Prostate gland (tissue), 2 donors: ENCODE measurements at regions of chr9 and their contacts with region 1.

Region 1: GRCh38 chr9:20622330-20623020 is at the start of gene MLLT3:
- DNase-seq: peak; percentile 95
- H3K4me3 ChIP-seq: peak within 1 kb of the TSS; percentile 80 to 90
- H3K27ac ChIP-seq: peak within 1 kb of the TSS; percentile 87 to 90
- H3K4me1 ChIP-seq: peaks cover 2% of the 10 kb centered on the region
- H3K27me3 ChIP-seq: no peaks in the 10 kb centered on the region
- CTCF ChIP-seq: peak in 2 of 4 experiments; percentile 30
- POLR2A ChIP-seq: peak; percentile 76
- total RNA-seq, gene MLLT3: 13.1 to 22.0 TPM

Region 2: DNA sequence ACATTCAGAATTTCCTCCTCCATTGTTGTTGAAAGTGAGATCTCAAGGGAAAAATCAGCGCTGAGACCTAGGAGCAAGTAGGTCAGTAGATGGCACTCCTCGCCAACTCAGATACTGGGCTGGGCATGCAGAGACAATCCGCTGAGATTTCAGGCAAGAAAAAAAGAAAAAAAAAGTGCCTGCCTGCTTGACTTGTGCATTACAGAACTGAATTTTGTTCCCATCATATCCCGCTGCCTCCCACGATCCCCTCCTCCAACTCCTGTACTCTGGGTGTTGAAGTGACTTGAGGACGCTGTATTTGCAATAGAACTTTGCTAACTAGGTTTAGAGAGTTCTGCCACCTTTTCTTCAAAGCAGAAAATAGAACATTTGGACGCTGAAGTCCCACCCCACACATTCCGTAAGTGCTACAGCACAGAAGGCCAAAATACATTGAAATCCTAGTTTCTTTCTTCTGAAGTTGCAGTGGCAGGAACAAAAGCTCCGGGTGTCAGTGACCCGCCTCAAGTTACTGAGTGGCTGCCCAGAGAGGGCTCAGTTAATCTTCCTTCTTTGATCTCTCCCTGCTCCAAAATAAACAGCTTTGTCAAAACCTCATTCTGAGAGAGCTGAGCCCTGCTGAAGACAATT is 266.0 kb before region 1 on chr9:
- intact Hi-C with region 1: loop called (anchors 2 kb)
- DNase-seq: peak; percentile 78
- H3K4me3 ChIP-seq: peak overlapping the region in 1 of 2 donors; percentile 14
- H3K27ac ChIP-seq: peak overlapping the region; percentile 38 to 59
- H3K4me1 ChIP-seq: peaks cover 4% of the 10 kb centered on the region
- H3K27me3 ChIP-seq: no peaks in the 10 kb centered on the region
- CTCF ChIP-seq: peak in 3 of 4 experiments; percentile 60 to 71 (median 64)
- POLR2A ChIP-seq: no peak

Region 3: GRCh38 chr9:20462410-20462809 is 160.1 kb before region 1 on chr9:
- intact Hi-C with region 1: no loop called
- DNase-seq: no peak
- H3K4me3 ChIP-seq: no peak overlapping the region
- H3K27ac ChIP-seq: no peak overlapping the region
- H3K4me1 ChIP-seq: no peaks in the 10 kb centered on the region
- H3K27me3 ChIP-seq: no peaks in the 10 kb centered on the region
- CTCF ChIP-seq: no peak
- POLR2A ChIP-seq: no peak

Region 4: DNA sequence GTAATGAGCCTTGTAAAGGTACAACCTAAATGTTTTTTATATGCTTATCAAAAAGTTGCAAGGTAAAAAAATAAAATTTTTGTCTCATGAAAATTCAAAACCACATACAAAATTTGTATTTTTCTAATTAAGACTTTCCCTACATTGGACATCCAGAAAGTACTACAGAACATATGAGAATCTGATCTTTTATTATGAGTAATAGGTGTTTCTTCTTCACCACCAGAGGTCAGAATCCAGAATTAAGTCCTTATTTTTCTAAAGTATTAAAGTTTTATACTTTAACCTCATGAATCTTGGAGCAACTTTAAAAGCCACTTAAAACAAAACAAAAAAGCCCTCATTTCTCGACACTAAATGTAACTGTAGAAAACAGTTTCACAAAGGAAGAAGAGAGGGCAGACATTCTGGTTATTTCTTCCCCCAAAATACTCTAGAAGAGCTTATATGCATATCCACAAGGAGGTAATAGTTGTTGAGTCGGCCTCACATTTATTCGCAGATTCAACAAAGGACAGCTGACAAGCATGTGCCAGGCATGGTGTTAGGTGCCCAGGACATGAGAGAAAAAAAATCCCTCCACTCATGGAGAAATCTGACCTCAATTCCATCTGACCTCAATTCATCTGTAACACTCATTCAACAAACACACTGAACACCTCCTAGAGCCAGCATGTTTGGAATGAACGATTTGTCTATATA is 69.5 kb before region 1 on chr9:
- intact Hi-C with region 1: loop called (anchors 5 kb)
- DNase-seq: no peak
- H3K4me3 ChIP-seq: no peak overlapping the region
- H3K27ac ChIP-seq: no peak overlapping the region
- H3K4me1 ChIP-seq: peaks cover 10% of the 10 kb centered on the region
- H3K27me3 ChIP-seq: no peaks in the 10 kb centered on the region
- CTCF ChIP-seq: peak in 2 of 4 experiments; percentile 27 to 28
- POLR2A ChIP-seq: no peak

Region 5: GRCh38 chr9:20835364-20836286 is 213.2 kb after region 1 on chr9:
- intact Hi-C with region 1: no loop called
- DNase-seq: no peak
- H3K4me3 ChIP-seq: no peak overlapping the region
- H3K27ac ChIP-seq: no peak overlapping the region
- H3K4me1 ChIP-seq: no peaks in the 10 kb centered on the region
- H3K27me3 ChIP-seq: no peaks in the 10 kb centered on the region
- CTCF ChIP-seq: no peak
- POLR2A ChIP-seq: no peak

Region 6: GRCh38 chr9:20941174-20941690 is 318.8 kb after region 1 on chr9:
- intact Hi-C with region 1: loop called (anchors 2 kb)
- DNase-seq: peak; percentile 67
- H3K4me3 ChIP-seq: no peak overlapping the region
- H3K27ac ChIP-seq: no peak overlapping the region
- H3K4me1 ChIP-seq: no peaks in the 10 kb centered on the region
- H3K27me3 ChIP-seq: no peaks in the 10 kb centered on the region
- CTCF ChIP-seq: peak; percentile 56 to 81 (median 80)
- POLR2A ChIP-seq: no peak